ENCODE measurements at regions of chr11 and their contacts with region 1.

Region 1: DNA sequence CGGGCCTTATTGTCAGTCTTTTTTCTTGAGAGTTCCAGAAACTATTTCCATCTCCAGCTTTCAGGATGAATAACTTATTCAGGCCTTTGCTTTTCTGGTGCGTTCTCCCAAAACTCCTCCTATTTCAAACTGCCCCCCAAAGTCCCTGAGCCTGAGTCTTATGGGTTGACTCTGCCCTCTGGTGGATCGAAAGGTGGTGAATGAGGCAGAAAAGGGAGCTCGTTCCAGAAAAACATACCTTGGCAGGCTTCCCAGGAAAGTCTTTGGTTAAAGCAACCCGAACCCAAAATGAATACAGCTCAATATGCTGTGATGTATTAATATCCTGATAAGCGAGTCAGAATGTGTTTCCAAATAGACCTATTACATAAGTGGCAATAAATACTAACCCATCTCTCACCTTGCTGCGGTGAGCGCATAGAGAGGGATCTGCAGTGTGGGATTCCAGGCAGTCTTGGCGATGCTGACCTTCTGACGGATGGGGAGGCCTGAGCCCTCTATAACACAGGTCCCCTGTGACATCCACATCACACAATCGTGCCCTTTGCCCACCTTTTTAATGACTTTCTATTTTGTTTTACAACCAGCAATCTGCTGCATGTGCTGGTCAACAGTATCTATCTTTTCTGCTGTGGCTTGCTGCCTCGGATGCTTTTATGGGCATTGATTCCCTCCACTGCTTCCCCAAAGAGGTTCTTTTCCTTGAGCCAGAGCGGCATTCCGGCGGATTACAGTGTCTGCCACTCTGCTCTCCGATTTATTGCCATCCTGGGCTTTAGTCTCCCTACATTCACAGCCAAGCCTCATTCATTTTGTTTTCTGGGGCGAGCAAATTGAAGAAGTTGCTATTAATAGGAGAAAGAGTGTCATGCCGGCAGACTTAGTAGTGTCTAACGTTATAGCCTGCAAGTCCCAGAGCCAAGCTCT is 756.8 kb downstream of the NTM start:
- DNase-seq: peak; percentile 71
- H3K4me3 ChIP-seq: peak overlapping the region in 2 of 3 experiments; percentile 26 to 31
- H3K27ac ChIP-seq: no peak overlapping the region
- H3K4me1 ChIP-seq: peaks cover 11% of the 10 kb centered on the region
- H3K27me3 ChIP-seq: no peaks in the 10 kb centered on the region
- CTCF ChIP-seq: peak; percentile 61 to 66
- POLR2A ChIP-seq: no peak

Region 2: GRCh38 chr11:131694526-131695424 is 432.5 kb before region 1 on chr11:
- CTCF ChIA-PET with region 1: interaction called, 260 read pairs
- POLR2A ChIA-PET with region 1: no interaction called
- dilution Hi-C with region 1: no loop called
- intact Hi-C with region 1: loop called (anchors 1 kb)
- DNase-seq: peak; percentile 75
- H3K4me3 ChIP-seq: no peak overlapping the region
- H3K27ac ChIP-seq: no peak overlapping the region
- H3K4me1 ChIP-seq: no peaks in the 10 kb centered on the region
- H3K27me3 ChIP-seq: peaks cover 0 to 2% of the 10 kb centered on the region in 2 experiments
- CTCF ChIP-seq: peak; percentile 92 to 97
- POLR2A ChIP-seq: no peak

Region 3: DNA sequence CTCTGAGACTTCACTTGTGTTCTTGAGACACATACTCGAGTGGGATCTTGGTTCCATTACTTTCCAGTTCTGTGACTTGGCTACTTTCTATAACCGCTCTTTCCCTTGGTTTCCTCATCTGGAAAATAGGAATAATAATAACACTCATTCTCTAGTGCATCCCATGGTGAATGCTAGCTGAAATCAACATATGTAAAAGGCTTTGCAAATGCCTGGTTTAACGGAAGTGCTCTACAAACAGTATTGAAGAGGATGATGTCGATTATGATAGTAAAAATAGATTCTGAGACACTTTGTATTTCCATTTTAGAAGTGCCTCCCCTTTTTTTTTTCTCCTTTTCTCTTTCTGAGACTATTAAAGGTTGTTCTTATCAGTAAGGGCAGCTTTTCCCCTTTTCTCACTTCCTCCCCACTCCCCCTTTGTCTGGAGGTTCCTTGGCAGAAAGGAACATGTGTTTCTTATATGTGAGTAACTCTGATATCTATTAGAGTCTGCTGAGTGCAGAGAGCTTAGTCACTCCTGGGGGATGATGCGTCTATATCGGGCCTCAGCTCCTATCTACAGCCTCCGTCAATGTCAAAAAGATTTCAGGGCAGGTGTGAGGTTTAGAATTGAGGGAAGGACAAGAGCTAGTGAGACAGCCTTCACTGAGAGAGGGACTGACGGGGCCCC is 267.6 kb before region 1 on chr11:
- CTCF ChIA-PET with region 1: interaction called, 323 read pairs
- POLR2A ChIA-PET with region 1: no interaction called
- dilution Hi-C with region 1: no loop called
- intact Hi-C with region 1: no loop called
- DNase-seq: peak; percentile 90
- H3K4me3 ChIP-seq: no peak overlapping the region
- H3K27ac ChIP-seq: peak overlapping the region; percentile 93
- H3K4me1 ChIP-seq: peaks cover 54% of the 10 kb centered on the region
- H3K27me3 ChIP-seq: no peaks in the 10 kb centered on the region
- CTCF ChIP-seq: no peak
- POLR2A ChIP-seq: no peak

Region 4: GRCh38 chr11:131904756-131905155 is 222.5 kb before region 1 on chr11:
- CTCF ChIA-PET with region 1: interaction called, 322 read pairs
- POLR2A ChIA-PET with region 1: no interaction called
- dilution Hi-C with region 1: no loop called
- intact Hi-C with region 1: no loop called
- DNase-seq: no peak
- H3K4me3 ChIP-seq: no peak overlapping the region
- H3K27ac ChIP-seq: no peak overlapping the region
- H3K4me1 ChIP-seq: no peaks in the 10 kb centered on the region
- H3K27me3 ChIP-seq: peaks cover 0 to 12% of the 10 kb centered on the region in 2 experiments
- CTCF ChIP-seq: no peak
- POLR2A ChIP-seq: no peak

Region 5: DNA sequence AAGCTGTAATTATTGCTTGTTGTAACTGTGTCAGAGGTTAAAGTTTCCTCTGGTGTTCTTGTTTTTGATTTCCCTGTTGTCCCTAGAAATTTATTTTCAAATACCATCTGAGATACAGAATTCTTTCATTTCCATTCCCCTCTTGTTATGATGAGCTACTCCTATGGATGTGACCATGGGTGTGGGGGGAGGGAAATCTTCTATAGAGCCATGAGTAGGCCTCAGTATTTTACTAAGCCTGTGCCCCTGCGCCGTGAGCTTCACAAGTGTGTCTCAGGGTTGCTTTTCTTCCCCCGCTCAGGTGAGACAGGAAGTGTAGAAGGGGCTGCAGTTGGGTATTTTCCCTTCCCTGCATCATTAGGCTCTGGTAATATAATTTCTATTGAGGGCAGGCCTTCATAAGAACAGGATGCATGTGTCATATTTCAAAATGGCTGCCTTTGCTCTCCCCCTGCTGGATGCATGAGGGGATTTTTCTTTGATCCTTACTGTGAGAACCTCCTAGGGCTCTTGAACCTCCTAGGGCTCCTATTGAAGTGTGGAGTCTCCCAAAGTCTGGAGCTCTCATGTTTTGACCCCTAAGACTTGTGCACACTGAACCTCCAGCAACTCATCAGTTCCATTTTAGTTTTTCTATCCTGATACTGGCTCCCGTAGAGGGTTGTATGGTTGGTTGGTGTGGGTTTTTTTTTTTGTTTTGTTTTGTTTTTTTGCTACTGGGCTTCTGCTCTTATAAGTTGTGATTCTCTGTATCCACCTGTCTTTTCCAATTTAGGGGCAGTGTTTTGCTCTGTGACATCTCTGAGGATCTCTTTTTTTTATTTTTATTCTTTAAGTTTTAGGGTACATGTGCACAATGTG is 98.6 kb before region 1 on chr11:
- CTCF ChIA-PET with region 1: interaction called, 21 read pairs
- POLR2A ChIA-PET with region 1: no interaction called
- dilution Hi-C with region 1: no loop called
- intact Hi-C with region 1: loop called (anchors 1 kb)
- DNase-seq: peak; percentile 74
- H3K4me3 ChIP-seq: no peak overlapping the region
- H3K27ac ChIP-seq: no peak overlapping the region
- H3K4me1 ChIP-seq: peaks cover 13% of the 10 kb centered on the region
- H3K27me3 ChIP-seq: no peaks in the 10 kb centered on the region
- CTCF ChIP-seq: peak; percentile 61 to 65
- POLR2A ChIP-seq: no peak

Region 6: DNA sequence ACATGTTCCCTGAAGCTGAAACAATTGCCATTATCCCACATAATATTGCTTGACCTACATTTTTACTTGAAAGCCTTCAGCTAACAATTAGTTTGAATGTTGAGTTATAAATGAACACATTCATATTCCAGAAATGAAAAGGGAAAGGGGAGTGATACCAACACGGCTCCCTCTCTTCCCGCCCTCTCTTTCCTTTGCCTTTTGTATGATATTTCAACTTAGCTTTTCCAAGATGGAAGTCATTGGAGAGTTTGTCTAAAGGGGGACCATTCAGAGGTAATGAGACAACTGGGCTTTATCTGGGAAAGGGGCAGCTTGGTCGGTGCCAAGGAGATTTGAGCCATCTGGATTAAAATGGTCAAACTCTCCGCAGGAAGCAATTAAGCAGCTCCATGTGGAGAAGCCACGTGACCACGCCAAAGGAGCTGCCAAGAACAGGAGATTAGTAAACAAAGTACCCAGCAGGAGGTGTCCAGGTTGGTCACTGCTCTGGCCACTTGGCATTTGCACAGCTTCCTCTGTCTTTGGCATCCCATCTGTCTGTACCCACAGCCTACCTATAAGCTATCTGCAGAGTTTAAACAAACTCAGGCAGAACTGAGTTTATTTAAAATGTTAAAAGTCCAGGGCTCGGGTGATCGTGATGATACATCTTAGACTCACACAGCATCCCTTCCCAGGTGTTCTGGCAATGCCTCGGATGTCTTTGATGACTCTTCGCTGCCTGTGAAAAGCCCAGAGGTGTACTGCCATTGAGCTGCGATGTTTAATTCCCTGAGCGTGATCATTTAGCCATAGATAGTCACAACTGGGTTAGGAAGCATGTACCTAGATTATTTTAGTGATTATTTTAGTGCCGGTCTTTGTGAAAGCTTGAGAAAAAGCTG is 20.9 kb before region 1 on chr11:
- CTCF ChIA-PET with region 1: interaction called, 35 read pairs
- POLR2A ChIA-PET with region 1: no interaction called
- dilution Hi-C with region 1: no loop called
- intact Hi-C with region 1: no loop called
- DNase-seq: no peak
- H3K4me3 ChIP-seq: no peak overlapping the region
- H3K27ac ChIP-seq: no peak overlapping the region
- H3K4me1 ChIP-seq: peaks cover under 1% of the 10 kb centered on the region
- H3K27me3 ChIP-seq: no peaks in the 10 kb centered on the region
- CTCF ChIP-seq: no peak
- POLR2A ChIP-seq: no peak

Region 7: GRCh38 chr11:132941024-132941646 is 813.9 kb after region 1 on chr11:
- CTCF ChIA-PET with region 1: interaction called, 17 read pairs
- POLR2A ChIA-PET with region 1: no interaction called
- dilution Hi-C with region 1: no loop called
- intact Hi-C with region 1: loop called (anchors 5 kb)
- DNase-seq: peak; percentile 19
- H3K4me3 ChIP-seq: no peak overlapping the region
- H3K27ac ChIP-seq: no peak overlapping the region
- H3K4me1 ChIP-seq: no peaks in the 10 kb centered on the region
- H3K27me3 ChIP-seq: peaks cover 10 to 17% of the 10 kb centered on the region in 2 experiments
- CTCF ChIP-seq: peak; percentile 67 to 71
- POLR2A ChIP-seq: no peak